ENCODE measurements at regions of chr17 and their contacts with region 1.

Region 1: GRCh38 chr17:42577532-42578281 is at the start of gene PSMC3IP:
- DNase-seq: peak; percentile 98
- H3K4me3 ChIP-seq: peak within 1 kb of the TSS; percentile 46 to 68 (median 60)
- H3K27ac ChIP-seq: peak within 1 kb of the TSS; percentile 88 to 93 (median 90)
- H3K4me1 ChIP-seq: peaks cover 0 to 22% (median 21%) of the 10 kb centered on the region in 4 donors
- H3K27me3 ChIP-seq: no peaks in the 10 kb centered on the region
- CTCF ChIP-seq: no peak
- EP300 ChIP-seq: peak in 1 of 4 donors; percentile 11
- POLR2A ChIP-seq: peak; percentile 75 to 81
- total RNA-seq, gene PSMC3IP: 4.6 to 10.3 (median 5.7) TPM

Region 2: DNA sequence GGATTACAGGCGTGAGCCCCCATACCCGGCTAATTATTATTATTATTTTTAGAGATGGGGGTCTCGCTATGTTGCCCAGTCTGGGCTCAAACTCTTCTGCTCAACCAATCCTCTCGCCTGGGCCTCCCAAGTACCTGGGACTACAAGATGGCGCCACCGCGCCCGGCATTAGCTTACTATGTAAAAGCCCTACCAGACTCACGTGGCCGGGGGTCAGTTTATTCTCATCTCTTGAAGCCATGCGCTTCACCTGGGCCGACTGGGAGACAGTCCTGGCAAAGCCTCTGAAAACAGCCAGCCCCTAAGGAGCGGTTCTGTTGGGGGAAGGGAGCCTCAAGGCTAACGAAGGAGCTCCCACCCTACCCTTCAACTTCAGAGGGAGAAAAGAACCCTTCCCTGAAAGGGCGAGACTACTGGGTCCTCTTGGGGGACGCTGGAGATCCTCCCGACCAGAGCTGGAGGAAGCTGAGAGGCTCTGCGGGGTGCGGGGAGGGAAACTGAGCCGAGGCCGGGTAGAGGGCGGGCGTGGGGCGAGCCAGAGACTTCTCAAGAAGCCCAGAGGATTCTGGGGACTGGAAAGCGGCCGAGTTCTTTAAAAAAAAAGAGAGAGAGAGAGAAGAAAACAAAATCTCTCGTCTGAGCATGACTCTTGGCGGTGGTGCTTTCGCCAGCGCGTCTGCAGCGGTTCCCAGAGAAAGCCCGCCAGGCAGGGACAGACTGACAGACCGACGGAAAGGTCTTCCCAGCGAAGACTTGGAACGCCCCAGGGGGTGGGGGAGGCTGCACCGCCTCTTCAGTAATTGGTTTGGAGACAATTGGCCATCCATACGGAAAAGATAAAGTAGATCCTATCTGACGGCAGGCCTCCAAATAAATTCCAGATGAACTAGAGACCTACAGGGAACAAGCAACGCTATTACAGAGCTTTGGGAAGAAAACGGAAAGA is 75.7 kb after region 1 on chr17:
- intact Hi-C with region 1: loop called (anchors 5 kb)
- DNase-seq: peak; percentile 92
- H3K4me3 ChIP-seq: peak overlapping the region; percentile 18 to 46 (median 40)
- H3K27ac ChIP-seq: peak overlapping the region; percentile 80 to 88 (median 85)
- H3K4me1 ChIP-seq: peaks cover 0 to 15% (median 11%) of the 10 kb centered on the region in 4 donors
- H3K27me3 ChIP-seq: no peaks in the 10 kb centered on the region
- CTCF ChIP-seq: no peak
- EP300 ChIP-seq: peak in 1 of 4 donors; percentile 8
- POLR2A ChIP-seq: no peak

Region 3: GRCh38 chr17:42677921-42678781 is 100.4 kb after region 1 on chr17:
- intact Hi-C with region 1: loop called (anchors 2 kb)
- DNase-seq: peak; percentile 96
- H3K4me3 ChIP-seq: peak overlapping the region; percentile 61 to 81 (median 68)
- H3K27ac ChIP-seq: peak overlapping the region; percentile 97 to 99 (median 98)
- H3K4me1 ChIP-seq: peaks cover 0 to 82% (median 76%) of the 10 kb centered on the region in 4 donors
- H3K27me3 ChIP-seq: no peaks in the 10 kb centered on the region
- CTCF ChIP-seq: no peak
- EP300 ChIP-seq: peak in 1 of 4 donors; percentile 22
- POLR2A ChIP-seq: peak in 1 of 2 donors; percentile 39

Region 4: GRCh38 chr17:42819944-42820535 is 242.3 kb after region 1 on chr17:
- intact Hi-C with region 1: loop called (anchors 10 kb)
- DNase-seq: no peak
- H3K4me3 ChIP-seq: no peak overlapping the region
- H3K27ac ChIP-seq: no peak overlapping the region
- H3K4me1 ChIP-seq: peaks cover 0 to 22% (median 18%) of the 10 kb centered on the region in 4 donors
- H3K27me3 ChIP-seq: no peaks in the 10 kb centered on the region
- CTCF ChIP-seq: peak in 3 of 4 experiments; percentile 17 to 56 (median 27)
- EP300 ChIP-seq: no peak
- POLR2A ChIP-seq: no peak